Thyroid gland (tissue), 4 donors: ENCODE measurements at regions of chr10 and their contacts with region 1.

Region 1: GRCh38 chr10:5873515-5873995 is 16.1 kb downstream of the ANKRD16 start:
- DNase-seq: peak; percentile 61 to 70
- H3K4me3 ChIP-seq: no peak overlapping the region
- H3K27ac ChIP-seq: no peak overlapping the region
- H3K4me1 ChIP-seq: peaks cover 0 to 14% of the 10 kb centered on the region in 2 donors
- H3K27me3 ChIP-seq: no peaks in the 10 kb centered on the region
- CTCF ChIP-seq: peak; percentile 63 to 78 (median 71)
- POLR2A ChIP-seq: no peak

Region 2: DNA sequence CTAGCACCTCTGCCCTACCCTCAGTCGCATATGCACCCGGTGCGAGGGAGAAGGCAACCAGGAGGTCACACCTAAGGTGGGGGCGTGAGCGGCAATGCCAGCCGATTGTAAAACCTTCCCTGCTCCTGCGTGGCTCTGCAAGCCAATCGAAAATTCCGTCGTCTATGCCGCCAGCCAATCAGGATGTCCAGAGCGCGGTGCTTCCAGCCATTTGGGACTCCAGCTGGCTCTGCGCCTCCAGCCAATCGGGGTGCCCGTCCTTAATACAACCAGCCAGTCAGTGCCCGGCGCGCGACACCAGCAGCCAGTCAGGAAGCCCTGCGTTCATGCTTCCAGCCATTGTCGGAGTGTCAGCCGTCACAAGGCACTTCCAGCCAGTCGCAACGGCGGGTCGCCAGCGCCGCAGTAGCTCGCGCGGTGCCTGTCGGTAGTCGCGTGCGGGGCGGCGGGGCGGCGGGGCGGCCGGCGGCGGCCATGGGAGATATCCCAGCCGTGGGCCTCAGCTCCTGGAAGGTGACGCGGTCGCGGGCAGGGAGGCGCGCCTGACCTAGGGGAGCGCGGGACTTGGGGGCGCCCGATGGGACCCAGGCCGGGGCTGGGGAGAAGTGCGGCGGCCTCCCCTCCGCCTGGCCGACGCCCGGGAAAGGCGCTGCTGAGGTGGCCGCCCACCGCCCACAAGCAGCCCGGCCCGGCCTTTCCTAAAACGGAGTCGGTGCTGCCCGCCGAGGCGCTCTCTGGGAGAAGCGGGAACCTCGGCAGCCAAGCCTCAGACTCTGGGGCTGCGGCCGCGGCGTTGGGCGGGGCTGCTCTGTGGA is 1047.5 kb before region 1 on chr10 and contains the start of gene AKR1E2:
- intact Hi-C with region 1: loop called (anchors 10 kb)
- DNase-seq: peak; percentile 81 to 82
- H3K4me3 ChIP-seq: peak within 1 kb of the TSS; percentile 15 to 54 (median 38)
- H3K27ac ChIP-seq: peak within 1 kb of the TSS; percentile 90 to 96 (median 91)
- H3K4me1 ChIP-seq: peaks cover 10 to 20% of the 10 kb centered on the region in 2 donors
- H3K27me3 ChIP-seq: no peaks in the 10 kb centered on the region
- CTCF ChIP-seq: no peak
- POLR2A ChIP-seq: peak in 1 of 2 donors; percentile 76
- total RNA-seq, gene AKR1E2: 14.4 to 18.5 (median 15.9) TPM

Region 3: DNA sequence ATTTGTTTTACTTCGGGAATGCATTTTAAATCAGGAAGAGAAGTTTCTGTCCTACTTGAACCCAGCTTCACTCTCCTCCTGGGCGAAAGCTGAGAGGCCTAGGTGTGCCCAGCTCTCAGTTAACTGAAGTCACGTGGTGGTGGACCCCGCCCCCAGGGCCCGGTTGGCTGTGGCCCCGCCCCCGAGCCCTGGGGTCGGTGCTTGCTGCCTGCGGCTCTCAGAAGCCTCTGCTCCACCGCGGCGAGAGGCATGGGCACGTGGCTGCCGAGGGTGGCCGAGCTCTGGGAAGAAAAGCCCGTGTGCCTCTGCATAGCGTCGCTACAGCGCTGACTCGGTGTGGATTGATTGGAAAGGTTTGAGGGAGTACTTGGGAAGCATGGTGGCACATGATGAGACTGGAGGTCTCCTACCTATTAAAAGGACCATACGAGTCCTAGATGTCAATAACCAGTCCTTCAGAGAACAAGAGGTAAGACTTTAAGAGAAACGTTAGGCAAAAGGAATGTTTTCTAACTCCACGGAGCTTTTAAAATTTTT is 427.1 kb before region 1 on chr10:
- intact Hi-C with region 1: loop called (anchors 10 kb)
- DNase-seq: peak; percentile 98
- H3K4me3 ChIP-seq: peak overlapping the region in 2 of 3 donors; percentile 40 to 52
- H3K27ac ChIP-seq: peak overlapping the region; percentile 48 to 80 (median 67)
- H3K4me1 ChIP-seq: peaks cover 19 to 32% of the 10 kb centered on the region in 2 donors
- H3K27me3 ChIP-seq: no peaks in the 10 kb centered on the region
- CTCF ChIP-seq: no peak
- POLR2A ChIP-seq: peak; percentile 93 to 100

Region 4: GRCh38 chr10:5666008-5666829 is 207.3 kb before region 1 on chr10 and contains the start of gene ASB13:
- intact Hi-C with region 1: loop called (anchors 5 kb)
- DNase-seq: peak; percentile 71 to 73
- H3K4me3 ChIP-seq: peak within 1 kb of the TSS; percentile 68 to 91 (median 75)
- H3K27ac ChIP-seq: peak within 1 kb of the TSS; percentile 36 to 59 (median 59)
- H3K4me1 ChIP-seq: peaks cover 7 to 9% of the 10 kb centered on the region in 2 donors
- H3K27me3 ChIP-seq: no peaks in the 10 kb centered on the region
- CTCF ChIP-seq: peak in 2 of 6 experiments; percentile 5 to 13
- POLR2A ChIP-seq: peak in 1 of 2 donors; percentile 59
- total RNA-seq, gene ASB13: 9.9 to 27.7 (median 14.2) TPM

Region 5: GRCh38 chr10:5684318-5684970 is 189.1 kb before region 1 on chr10 and contains the start of gene TASOR2:
- intact Hi-C with region 1: loop called (anchors 5 kb)
- DNase-seq: peak; percentile 98 to 99
- H3K4me3 ChIP-seq: peak within 1 kb of the TSS; percentile 76 to 98 (median 96)
- H3K27ac ChIP-seq: peak within 1 kb of the TSS; percentile 50 to 86 (median 71)
- H3K4me1 ChIP-seq: peaks cover 4 to 14% of the 10 kb centered on the region in 2 donors
- H3K27me3 ChIP-seq: no peaks in the 10 kb centered on the region
- CTCF ChIP-seq: no peak
- POLR2A ChIP-seq: peak in 1 of 2 donors; percentile 58
- total RNA-seq, gene TASOR2: 73.2 to 132 (median 96.3) TPM

Region 6: GRCh38 chr10:5813287-5814109 is 60.1 kb before region 1 on chr10 and contains the start of gene GDI2:
- intact Hi-C with region 1: loop called (anchors 5 kb)
- DNase-seq: peak; percentile 96
- H3K4me3 ChIP-seq: peak within 1 kb of the TSS; percentile 93 to 99 (median 95)
- H3K27ac ChIP-seq: peak within 1 kb of the TSS; percentile 93 to 98 (median 97)
- H3K4me1 ChIP-seq: peaks cover 32 to 36% of the 10 kb centered on the region in 2 donors
- H3K27me3 ChIP-seq: no peaks in the 10 kb centered on the region
- CTCF ChIP-seq: peak in 1 of 6 experiments; percentile 8
- POLR2A ChIP-seq: peak; percentile 52 to 89
- total RNA-seq, gene GDI2: 189 to 281 (median 236) TPM